Heart left ventricle (tissue), 16 donors: ENCODE measurements at regions of chr2 and their contacts with region 1.

Region 1: GRCh38 chr2:131673392-131674173 is 145.9 kb downstream of the CCDC74A start:
- DNase-seq: peak; percentile 76 to 90 (median 80)
- ATAC-seq: peak; percentile 80 to 98 (median 94)
- H3K4me3 ChIP-seq: peak overlapping the region; percentile 14 to 49 (median 41)
- H3K27ac ChIP-seq: no peak overlapping the region
- H3K4me1 ChIP-seq: peaks cover 0 to 33% (median 21%) of the 10 kb centered on the region in 12 donors
- H3K27me3 ChIP-seq: peaks cover 0 to 24% (median 4%) of the 10 kb centered on the region in 9 donors
- CTCF ChIP-seq: peak; percentile 82 to 94 (median 88)
- POLR2A ChIP-seq: no peak

Region 2: DNA sequence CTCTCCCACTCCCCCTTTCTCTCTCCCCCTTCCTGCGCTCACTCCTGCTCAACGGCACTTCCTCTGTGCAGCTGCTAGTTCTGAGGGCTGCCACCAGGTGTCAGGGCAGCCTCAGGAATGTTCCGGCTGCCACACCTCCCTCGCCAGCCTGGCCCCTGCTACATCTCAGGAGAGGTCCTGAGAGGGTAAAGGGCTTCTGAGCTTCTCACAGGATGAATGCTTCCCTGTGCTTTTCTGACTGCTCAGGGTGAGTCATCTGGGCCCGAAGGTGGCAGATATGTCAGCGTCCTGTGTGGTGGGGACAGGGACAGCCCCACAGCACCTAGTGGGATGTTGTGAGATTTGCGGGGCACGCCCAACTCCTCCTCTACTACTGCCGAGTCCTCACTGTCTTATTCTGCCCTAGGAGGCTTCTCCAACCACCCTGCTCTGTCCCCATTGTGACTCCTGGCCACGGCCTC is 519.5 kb before region 1 on chr2:
- intact Hi-C with region 1: loop called in 5 of 10 experiments (anchors 5 to 10 kb)
- DNase-seq: peak in 3 of 5 donors; percentile 54 to 74 (median 58)
- ATAC-seq: peak; percentile 72 to 90 (median 84)
- H3K4me3 ChIP-seq: no peak overlapping the region
- H3K27ac ChIP-seq: no peak overlapping the region
- H3K4me1 ChIP-seq: peaks cover 0 to 4% (median 0%) of the 10 kb centered on the region in 12 donors
- H3K27me3 ChIP-seq: no peaks in the 10 kb centered on the region
- CTCF ChIP-seq: peak; percentile 51 to 85 (median 73)
- POLR2A ChIP-seq: no peak

Region 3: DNA sequence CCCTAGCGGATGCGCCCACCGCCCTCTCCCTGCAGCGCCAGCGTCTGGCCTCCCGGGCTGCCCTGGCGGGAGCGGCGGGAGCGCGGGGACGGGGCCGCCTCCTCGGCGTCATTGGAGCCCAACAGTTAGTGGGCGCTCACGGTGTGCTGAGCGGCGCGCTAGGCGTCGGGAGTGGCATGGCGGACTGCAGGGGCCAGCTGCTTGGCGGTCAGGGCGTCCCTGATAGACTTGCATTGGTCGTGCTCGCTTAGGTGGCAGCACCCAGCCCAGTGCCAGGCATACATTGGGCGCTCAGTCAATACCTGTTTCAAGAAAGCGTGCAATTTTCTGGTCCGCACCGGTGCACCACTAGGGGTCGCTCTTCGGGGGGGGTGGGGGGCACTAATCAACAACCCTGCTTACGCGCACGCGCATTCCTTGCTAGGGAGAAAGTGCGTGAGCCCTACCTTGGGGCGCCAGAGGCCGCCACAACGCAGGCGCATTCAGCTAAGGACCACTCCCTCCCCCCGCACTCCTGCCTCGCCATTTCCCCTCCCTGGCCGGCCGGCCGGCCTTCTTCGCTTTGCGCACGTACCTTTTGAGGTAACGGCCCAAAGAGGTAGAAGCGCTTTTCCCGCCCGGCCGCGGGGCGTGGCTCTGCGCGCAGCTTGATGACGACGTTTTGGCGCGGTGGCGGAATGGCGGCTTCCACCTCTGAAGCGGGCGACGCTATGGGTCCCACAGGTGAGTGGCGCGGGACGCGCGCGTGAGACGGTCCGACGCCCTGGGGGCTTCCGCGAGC is 181.0 kb before region 1 on chr2:
- intact Hi-C with region 1: loop called in 1 of 10 experiments (anchors 10 kb)
- DNase-seq: peak; percentile 92 to 96 (median 93)
- ATAC-seq: peak; percentile 86 to 96 (median 88)
- H3K4me3 ChIP-seq: peak overlapping the region; percentile 65 to 97 (median 84)
- H3K27ac ChIP-seq: peak overlapping the region; percentile 82 to 96 (median 88)
- H3K4me1 ChIP-seq: peaks cover 2 to 63% (median 24%) of the 10 kb centered on the region in 12 donors
- H3K27me3 ChIP-seq: no peaks in the 10 kb centered on the region
- CTCF ChIP-seq: peak; percentile 56 to 87 (median 75)
- POLR2A ChIP-seq: peak in 1 of 2 donors; percentile 59

Region 4: DNA sequence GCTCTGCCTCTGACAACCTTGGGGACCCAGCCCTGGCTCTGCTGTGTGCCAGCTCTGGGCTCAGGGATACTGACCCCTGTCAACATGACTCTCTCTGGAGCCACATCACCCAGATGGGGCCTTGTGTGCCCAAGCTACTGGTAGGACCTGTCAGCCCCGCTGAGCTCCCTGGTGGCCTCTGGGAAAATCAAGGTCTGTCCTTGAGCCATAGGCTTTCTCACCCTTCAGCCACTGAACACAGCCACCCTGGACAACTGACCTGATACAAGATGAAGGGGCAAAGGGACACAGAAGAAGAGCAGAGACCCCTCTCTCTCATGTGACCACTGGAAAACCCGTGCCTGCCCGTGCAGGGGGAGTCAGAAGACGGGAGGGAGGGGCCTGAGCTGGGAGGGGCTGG is 138.1 kb before region 1 on chr2:
- intact Hi-C with region 1: no loop called
- DNase-seq: peak in 1 of 5 donors; percentile 25
- ATAC-seq: no peak
- H3K4me3 ChIP-seq: no peak overlapping the region
- H3K27ac ChIP-seq: no peak overlapping the region
- H3K4me1 ChIP-seq: no peaks in the 10 kb centered on the region
- H3K27me3 ChIP-seq: no peaks in the 10 kb centered on the region
- CTCF ChIP-seq: no peak
- POLR2A ChIP-seq: no peak

Region 5: DNA sequence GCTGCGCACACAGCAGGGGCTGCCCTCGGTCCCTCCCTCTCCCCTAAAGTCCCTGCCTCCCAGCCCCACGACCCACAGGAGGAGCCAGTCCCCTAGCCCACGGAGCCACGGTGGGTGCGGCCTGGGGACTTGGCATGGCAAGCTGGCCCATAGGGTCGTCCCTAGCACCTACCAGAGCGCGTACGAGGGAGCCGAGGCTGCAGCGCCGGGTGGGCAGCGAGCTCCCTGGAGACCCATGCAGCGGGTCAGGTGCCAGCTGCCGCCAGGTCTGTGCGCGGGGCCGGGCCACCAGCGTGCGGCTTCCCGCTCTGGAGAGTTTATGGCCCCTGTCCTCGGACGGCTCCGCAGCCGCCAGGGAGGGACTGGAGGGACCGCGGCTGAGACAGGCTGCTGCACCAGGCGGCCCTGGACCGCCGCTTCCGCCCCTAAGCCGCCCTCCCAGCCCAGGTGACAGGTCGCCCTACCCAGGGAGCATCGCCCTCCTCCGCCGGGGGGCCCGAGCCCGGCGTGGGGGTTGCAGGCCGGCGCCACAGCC is 127.7 kb after region 1 on chr2:
- intact Hi-C with region 1: loop called in 9 of 10 experiments (anchors 2 to 10 kb)
- DNase-seq: no peak
- ATAC-seq: no peak
- H3K4me3 ChIP-seq: peak overlapping the region in 6 of 12 donors; percentile 17 to 54 (median 38)
- H3K27ac ChIP-seq: no peak overlapping the region
- H3K4me1 ChIP-seq: peaks cover 0 to 14% (median 2%) of the 10 kb centered on the region in 12 donors
- H3K27me3 ChIP-seq: peaks cover 0 to 8% (median 4%) of the 10 kb centered on the region in 9 donors
- CTCF ChIP-seq: no peak
- POLR2A ChIP-seq: no peak

Region 6: GRCh38 chr2:131816831-131817230 is 143.2 kb after region 1 on chr2:
- intact Hi-C with region 1: no loop called
- DNase-seq: no peak
- ATAC-seq: no peak
- H3K4me3 ChIP-seq: no peak overlapping the region
- H3K27ac ChIP-seq: no peak overlapping the region
- H3K4me1 ChIP-seq: no peaks in the 10 kb centered on the region
- H3K27me3 ChIP-seq: no peaks in the 10 kb centered on the region
- CTCF ChIP-seq: no peak
- POLR2A ChIP-seq: no peak